GM12878 (cell line): ENCODE measurements at regions of chr11 and their contacts with region 1.

Region 1: DNA sequence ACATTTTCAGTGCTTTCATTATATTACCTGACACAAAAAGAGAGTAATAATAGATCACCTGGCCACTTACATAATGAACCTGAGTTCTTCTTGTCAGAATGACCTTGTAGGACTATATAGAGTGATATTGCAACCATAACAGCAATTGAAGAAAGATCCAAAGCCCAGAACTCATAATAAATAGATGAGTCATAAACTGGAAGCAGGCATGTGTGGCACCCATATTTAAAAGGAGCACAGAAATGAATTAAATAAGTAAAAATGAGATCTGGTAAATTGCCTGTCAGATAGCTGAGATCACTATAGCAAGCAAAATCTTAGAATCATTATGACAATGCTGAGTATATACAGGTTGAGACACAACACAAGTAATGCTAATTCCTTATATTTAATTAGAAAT is 331.8 kb downstream of the AASDHPPT start:
- DNase-seq: no peak
- ATAC-seq: no peak
- H3K4me3 ChIP-seq: no peak overlapping the region
- H3K27ac ChIP-seq: no peak overlapping the region
- H3K4me1 ChIP-seq: no peaks in the 10 kb centered on the region
- H3K27me3 ChIP-seq: no peaks in the 10 kb centered on the region
- CTCF ChIP-seq: no peak
- EP300 ChIP-seq: no peak
- POLR2A ChIP-seq: no peak
- RAD21 ChIP-seq: no peak

Region 2: DNA sequence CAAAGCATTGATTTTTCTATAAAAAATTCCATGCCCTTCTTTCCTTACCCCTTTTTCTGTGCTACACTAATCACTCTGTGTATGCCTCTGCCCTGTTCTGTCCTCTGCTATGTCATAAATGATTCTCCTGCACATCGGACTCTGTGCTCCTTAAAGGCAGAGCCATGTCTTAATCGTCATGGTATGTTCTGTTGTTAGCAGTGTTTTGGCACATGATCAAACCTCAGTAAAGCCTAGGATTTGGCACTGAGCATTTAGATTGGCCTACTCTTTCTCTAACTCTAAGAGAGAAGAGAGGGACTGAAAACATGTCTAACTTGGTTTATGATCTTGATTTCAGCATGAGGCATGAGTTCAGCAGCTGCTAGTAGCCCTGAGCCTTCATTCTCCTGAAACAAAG is 64.8 kb before region 1 on chr11:
- CTCF ChIA-PET with region 1: no interaction called
- POLR2A ChIA-PET with region 1: no interaction called
- RAD21 ChIA-PET with region 1: no interaction called
- SMC1A ChIA-PET with region 1: no interaction called
- in situ Hi-C with region 1: no loop called
- intact Hi-C with region 1: no loop called
- DNase-seq: no peak
- ATAC-seq: no peak
- H3K4me3 ChIP-seq: no peak overlapping the region
- H3K27ac ChIP-seq: no peak overlapping the region
- H3K4me1 ChIP-seq: no peaks in the 10 kb centered on the region
- H3K27me3 ChIP-seq: no peaks in the 10 kb centered on the region
- CTCF ChIP-seq: no peak
- EP300 ChIP-seq: no peak
- POLR2A ChIP-seq: no peak
- RAD21 ChIP-seq: no peak

Region 3: GRCh38 chr11:106457727-106458126 is 48.5 kb after region 1 on chr11:
- CTCF ChIA-PET with region 1: no interaction called
- POLR2A ChIA-PET with region 1: no interaction called
- RAD21 ChIA-PET with region 1: no interaction called
- SMC1A ChIA-PET with region 1: no interaction called
- in situ Hi-C with region 1: no loop called
- intact Hi-C with region 1: loop called (anchors 5 kb)
- DNase-seq: no peak
- ATAC-seq: no peak
- H3K4me3 ChIP-seq: no peak overlapping the region
- H3K27ac ChIP-seq: no peak overlapping the region
- H3K4me1 ChIP-seq: no peaks in the 10 kb centered on the region
- H3K27me3 ChIP-seq: no peaks in the 10 kb centered on the region
- CTCF ChIP-seq: no peak
- EP300 ChIP-seq: no peak
- POLR2A ChIP-seq: no peak
- RAD21 ChIP-seq: no peak

Region 4: DNA sequence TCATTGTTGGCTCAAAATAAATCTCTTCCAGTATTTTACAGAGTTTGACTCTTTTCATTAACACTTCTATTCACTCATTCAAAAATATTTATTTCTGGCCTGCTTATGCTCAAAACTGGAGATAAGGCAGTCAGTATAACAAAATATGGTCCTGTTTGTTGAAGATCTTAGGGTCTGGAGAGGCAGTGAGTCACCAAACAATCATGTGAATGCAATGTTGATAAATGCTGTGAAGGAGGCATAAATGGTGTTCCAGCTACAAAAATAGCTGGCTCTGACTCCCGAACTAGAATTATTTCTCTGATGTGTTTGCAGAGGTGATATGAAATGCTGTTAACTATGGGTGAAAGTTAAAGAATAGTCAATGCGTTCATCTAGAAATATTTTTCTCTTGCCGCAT is 58.9 kb after region 1 on chr11:
- CTCF ChIA-PET with region 1: no interaction called
- POLR2A ChIA-PET with region 1: no interaction called
- RAD21 ChIA-PET with region 1: no interaction called
- SMC1A ChIA-PET with region 1: no interaction called
- in situ Hi-C with region 1: no loop called
- intact Hi-C with region 1: no loop called
- DNase-seq: no peak
- ATAC-seq: no peak
- H3K4me3 ChIP-seq: no peak overlapping the region
- H3K27ac ChIP-seq: no peak overlapping the region
- H3K4me1 ChIP-seq: no peaks in the 10 kb centered on the region
- H3K27me3 ChIP-seq: no peaks in the 10 kb centered on the region; a peak in 1 of 4 replicates
- CTCF ChIP-seq: no peak
- EP300 ChIP-seq: no peak
- POLR2A ChIP-seq: no peak
- RAD21 ChIP-seq: no peak